ENCODE measurements at regions of chr7 and their contacts with region 1.

Region 1: DNA sequence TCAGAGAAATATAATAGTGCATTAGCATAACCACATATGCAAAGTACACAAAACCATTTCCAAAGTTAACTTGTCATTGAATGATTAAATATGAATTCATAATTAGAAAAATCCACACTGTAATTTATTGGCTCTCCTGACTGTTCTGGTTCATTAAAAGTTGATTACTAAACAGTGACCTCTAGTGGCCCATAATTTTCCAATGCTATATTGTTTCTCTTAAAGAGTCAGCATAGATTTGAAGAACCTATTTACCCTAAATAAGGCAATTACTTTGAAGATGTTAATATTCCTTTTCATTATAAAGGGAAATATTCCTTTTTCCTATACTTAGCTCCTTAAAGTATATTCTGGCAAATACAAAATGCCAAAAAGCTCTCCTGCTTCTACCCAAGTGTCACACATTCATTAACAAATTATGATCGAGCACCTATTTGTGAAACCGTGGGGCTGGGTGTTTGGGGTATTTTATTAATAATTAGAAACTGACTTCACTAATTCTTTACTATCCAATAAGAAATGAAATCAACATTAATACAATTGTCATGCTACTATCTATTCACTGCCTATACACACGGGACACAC is 86.2 kb downstream of the HIBADH start:
- DNase-seq: no peak
- H3K4me3 ChIP-seq: no peak overlapping the region
- H3K27ac ChIP-seq: no peak overlapping the region
- H3K4me1 ChIP-seq: peaks cover 0 to 4% (median 0%) of the 10 kb centered on the region in 4 donors
- H3K27me3 ChIP-seq: no peaks in the 10 kb centered on the region
- CTCF ChIP-seq: peak; percentile 59 to 70 (median 68)
- EP300 ChIP-seq: no peak
- POLR2A ChIP-seq: no peak

Region 2: GRCh38 chr7:27235387-27236311 is 340.8 kb before region 1 on chr7:
- in situ Hi-C with region 1: loop called in 3 of 4 experiments (anchors 10 kb)
- intact Hi-C with region 1: no loop called
- DNase-seq: peak; percentile 77
- H3K4me3 ChIP-seq: peak overlapping the region; percentile 18 to 60 (median 38)
- H3K27ac ChIP-seq: no peak overlapping the region
- H3K4me1 ChIP-seq: peaks cover 14 to 23% (median 21%) of the 10 kb centered on the region in 4 donors
- H3K27me3 ChIP-seq: peaks cover 65% of the 10 kb centered on the region
- CTCF ChIP-seq: peak; percentile 31 to 66 (median 43)
- EP300 ChIP-seq: no peak
- POLR2A ChIP-seq: no peak

Region 3: DNA sequence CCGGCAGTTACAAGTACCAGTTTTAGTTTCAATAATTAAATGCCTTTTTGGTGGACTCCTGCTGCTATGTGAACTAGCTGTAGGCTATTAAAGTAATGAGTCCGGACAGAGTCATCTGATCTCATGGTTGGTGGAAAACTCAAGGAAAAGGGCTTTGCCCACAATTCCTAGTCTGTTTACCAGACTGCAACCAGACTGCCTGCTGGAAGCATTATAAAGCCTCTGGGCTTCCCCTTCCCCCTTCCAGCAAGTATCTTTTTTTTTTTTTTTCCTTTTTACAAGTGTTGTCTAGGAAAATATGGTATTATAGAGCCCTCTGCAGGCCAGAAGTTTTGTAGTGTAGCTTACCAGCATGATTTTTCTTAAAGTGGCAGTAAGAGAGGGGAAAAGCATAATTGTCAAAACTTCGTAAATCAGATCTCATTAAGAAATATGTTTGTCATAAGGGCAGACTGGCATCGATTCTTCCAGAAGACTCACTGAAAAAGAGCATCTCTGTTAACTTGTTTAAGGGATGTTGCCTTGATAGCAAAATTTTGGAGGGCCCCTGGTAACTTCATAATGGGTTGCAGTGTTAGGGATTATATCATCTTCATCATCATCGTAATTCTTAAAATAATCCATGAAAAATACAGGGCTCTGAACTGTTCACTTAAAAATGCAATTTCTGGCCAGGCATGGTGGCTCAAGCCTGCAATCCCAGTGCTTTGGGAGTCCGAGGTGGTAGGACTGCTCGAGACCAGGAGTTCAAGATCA is 344.8 kb after region 1 on chr7:
- in situ Hi-C with region 1: loop called in 1 of 4 experiments (anchors 25 kb)
- intact Hi-C with region 1: no loop called
- DNase-seq: peak; percentile 22
- H3K4me3 ChIP-seq: peak overlapping the region in 1 of 4 donors; percentile 19
- H3K27ac ChIP-seq: no peak overlapping the region
- H3K4me1 ChIP-seq: peaks cover 0 to 17% (median 7%) of the 10 kb centered on the region in 4 donors
- H3K27me3 ChIP-seq: no peaks in the 10 kb centered on the region
- CTCF ChIP-seq: peak; percentile 46 to 67 (median 50)
- EP300 ChIP-seq: no peak
- POLR2A ChIP-seq: no peak